Activated T-helper 1 cell treated with anti-CD3 and anti-CD28 coated beads, Interleukin-12 subunit alpha, Interleukin-12 subunit beta, Interleukin-2, Interleukin-4 antibody, amounts not matched to agents 30 ng/mL and 10 ng/mL and 1 ng/mL, durations not matched to agents 14 hours and 24 hours and 36 hours (primary cell): ENCODE measurements at regions of chr5 and their contacts with region 1.

Region 1: GRCh38 chr5:117454716-117455596 is 880.3 kb upstream of the SEMA6A start:
- DNase-seq: peak; percentile 17
- H3K4me3 Mint-ChIP-seq: no peak overlapping the region
- H3K27ac Mint-ChIP-seq: no peak overlapping the region
- H3K4me1 Mint-ChIP-seq: peaks cover 8% of the 10 kb centered on the region
- H3K27me3 Mint-ChIP-seq: no peaks in the 10 kb centered on the region

Region 2: GRCh38 chr5:117417323-117417900 is 37.5 kb before region 1 on chr5:
- intact Hi-C with region 1: no loop called
- DNase-seq: no peak
- H3K4me3 Mint-ChIP-seq: no peak overlapping the region
- H3K27ac Mint-ChIP-seq: no peak overlapping the region
- H3K4me1 Mint-ChIP-seq: no peaks in the 10 kb centered on the region
- H3K27me3 Mint-ChIP-seq: no peaks in the 10 kb centered on the region

Region 3: DNA sequence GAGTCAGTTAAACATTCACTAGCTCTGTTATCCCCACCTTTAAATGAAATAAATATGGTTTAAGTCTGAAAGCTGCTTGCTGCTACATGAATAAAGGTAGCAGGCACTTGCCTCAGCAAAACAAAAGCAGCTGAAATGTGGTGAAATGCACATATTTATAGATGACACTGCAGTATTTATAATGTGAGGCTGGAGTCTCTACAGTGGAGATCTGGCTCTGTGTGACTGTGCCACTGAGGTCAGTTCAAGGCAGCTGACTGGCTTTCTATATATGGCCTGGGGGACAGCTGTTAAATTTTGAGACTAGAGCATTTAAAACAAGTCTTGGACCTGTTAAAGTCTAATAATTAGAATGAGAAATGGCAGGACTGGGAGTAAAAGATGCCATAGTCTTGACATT is 20.7 kb before region 1 on chr5:
- intact Hi-C with region 1: no loop called
- DNase-seq: no peak
- H3K4me3 Mint-ChIP-seq: no peak overlapping the region
- H3K27ac Mint-ChIP-seq: no peak overlapping the region
- H3K4me1 Mint-ChIP-seq: no peaks in the 10 kb centered on the region
- H3K27me3 Mint-ChIP-seq: no peaks in the 10 kb centered on the region

Region 4: GRCh38 chr5:118611332-118611945 is 1156.5 kb after region 1 on chr5:
- intact Hi-C with region 1: loop called (anchors 10 kb)
- DNase-seq: no peak
- H3K4me3 Mint-ChIP-seq: no peak overlapping the region
- H3K27ac Mint-ChIP-seq: no peak overlapping the region
- H3K4me1 Mint-ChIP-seq: no peaks in the 10 kb centered on the region
- H3K27me3 Mint-ChIP-seq: no peaks in the 10 kb centered on the region

Region 5: GRCh38 chr5:118791926-118792734 is 1337.2 kb after region 1 on chr5:
- intact Hi-C with region 1: loop called (anchors 1 kb)
- DNase-seq: no peak
- H3K4me3 Mint-ChIP-seq: no peak overlapping the region
- H3K27ac Mint-ChIP-seq: no peak overlapping the region
- H3K4me1 Mint-ChIP-seq: no peaks in the 10 kb centered on the region
- H3K27me3 Mint-ChIP-seq: peaks cover 2% of the 10 kb centered on the region